Activated CD8-positive, alpha-beta T cell treated with anti-CD3 and anti-CD28 coated beads for 36 hours (primary cell): ENCODE measurements at regions of chr1 and their contacts with region 1.

Region 1: GRCh38 chr1:200628223-200628881 is 7.8 kb upstream of the KIF14 start:
- DNase-seq: peak; percentile 78
- ATAC-seq: peak; percentile 65
- H3K4me3 Mint-ChIP-seq: peak overlapping the region; percentile 28
- H3K27ac Mint-ChIP-seq: peak overlapping the region; percentile 32
- H3K4me1 Mint-ChIP-seq: peaks cover 38% of the 10 kb centered on the region
- H3K27me3 Mint-ChIP-seq: no peaks in the 10 kb centered on the region
- CTCF ChIP-seq: no peak

Region 2: GRCh38 chr1:200739499-200740290 is 111.3 kb after region 1 on chr1:
- CTCF ChIA-PET with region 1: interaction called, 6 read pairs
- POLR2A ChIA-PET with region 1: no interaction called
- intact Hi-C with region 1: loop called (anchors 5 kb)
- DNase-seq: no peak
- ATAC-seq: peak; percentile 58
- H3K4me3 Mint-ChIP-seq: peak overlapping the region; percentile 89
- H3K27ac Mint-ChIP-seq: no peak overlapping the region
- H3K4me1 Mint-ChIP-seq: peaks cover 33% of the 10 kb centered on the region
- H3K27me3 Mint-ChIP-seq: peaks cover 7% of the 10 kb centered on the region
- CTCF ChIP-seq: no peak